Activated T-helper 1 cell treated with anti-CD3 and anti-CD28 coated beads, Interleukin-12 subunit alpha, Interleukin-12 subunit beta, Interleukin-2, Interleukin-4 antibody, amounts not matched to agents 30 ng/mL and 10 ng/mL and 1 ng/mL, durations not matched to agents 14 hours and 24 hours and 36 hours (primary cell): ENCODE measurements at regions of chr7 and their contacts with region 1.

Region 1: DNA sequence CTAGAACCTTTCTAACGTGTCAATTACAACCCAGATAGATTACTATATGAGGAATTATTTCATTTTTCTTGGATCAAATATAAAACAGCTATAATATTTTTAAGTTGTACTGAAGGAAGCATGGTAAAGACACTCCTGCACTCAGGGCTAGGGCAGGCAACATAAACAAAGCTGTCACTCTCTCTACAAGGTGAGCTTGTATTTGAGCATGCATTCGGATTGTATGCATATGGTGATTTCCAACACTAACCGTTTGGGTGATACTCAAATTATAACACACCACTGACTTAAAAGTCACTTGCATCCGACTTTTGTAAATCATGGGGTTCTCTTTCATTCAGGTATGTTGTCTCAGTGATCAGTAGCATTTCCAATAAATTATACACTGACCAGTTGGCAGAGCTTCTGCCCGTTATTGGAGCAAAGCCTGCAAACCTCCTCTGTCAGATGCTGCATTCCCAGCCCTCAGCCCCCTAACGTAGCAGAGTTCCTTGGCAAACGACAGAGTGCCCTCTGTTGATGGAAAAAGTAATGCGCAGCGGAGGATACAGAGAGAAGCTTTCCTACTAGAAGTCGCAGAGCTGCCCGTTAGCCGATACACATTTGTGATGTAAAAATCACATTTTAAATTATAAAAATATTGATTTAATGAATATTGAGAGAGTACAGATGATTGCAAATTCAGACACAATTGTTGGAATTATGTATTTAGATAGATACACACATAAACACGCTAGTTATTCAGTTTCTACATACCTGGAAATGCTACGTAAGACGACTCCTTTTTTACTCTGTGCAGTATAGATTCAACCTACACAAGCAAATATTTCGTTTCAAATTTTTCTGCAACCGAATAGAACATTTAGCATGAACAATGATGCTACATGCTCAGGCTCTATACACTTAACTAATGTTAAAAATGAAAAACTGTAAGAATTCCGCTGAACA is 173.9 kb upstream of the SP4 start:
- DNase-seq: peak; percentile 37
- H3K4me3 Mint-ChIP-seq: peak overlapping the region; percentile 74
- H3K27ac Mint-ChIP-seq: peak overlapping the region; percentile 32
- H3K4me1 Mint-ChIP-seq: peaks cover 21% of the 10 kb centered on the region
- H3K27me3 Mint-ChIP-seq: peaks cover 70% of the 10 kb centered on the region

Region 2: GRCh38 chr7:20778063-20778721 is 475.8 kb before region 1 on chr7:
- intact Hi-C with region 1: loop called (anchors 5 kb)
- DNase-seq: no peak
- H3K4me3 Mint-ChIP-seq: no peak overlapping the region
- H3K27ac Mint-ChIP-seq: no peak overlapping the region
- H3K4me1 Mint-ChIP-seq: peaks cover 9% of the 10 kb centered on the region
- H3K27me3 Mint-ChIP-seq: peaks cover 73% of the 10 kb centered on the region

Region 3: GRCh38 chr7:21352540-21353387 is 98.8 kb after region 1 on chr7:
- intact Hi-C with region 1: loop called (anchors 5 kb)
- DNase-seq: no peak
- H3K4me3 Mint-ChIP-seq: peak overlapping the region; percentile 67
- H3K27ac Mint-ChIP-seq: peak overlapping the region; percentile 96
- H3K4me1 Mint-ChIP-seq: peaks cover 69% of the 10 kb centered on the region
- H3K27me3 Mint-ChIP-seq: no peaks in the 10 kb centered on the region

Region 4: DNA sequence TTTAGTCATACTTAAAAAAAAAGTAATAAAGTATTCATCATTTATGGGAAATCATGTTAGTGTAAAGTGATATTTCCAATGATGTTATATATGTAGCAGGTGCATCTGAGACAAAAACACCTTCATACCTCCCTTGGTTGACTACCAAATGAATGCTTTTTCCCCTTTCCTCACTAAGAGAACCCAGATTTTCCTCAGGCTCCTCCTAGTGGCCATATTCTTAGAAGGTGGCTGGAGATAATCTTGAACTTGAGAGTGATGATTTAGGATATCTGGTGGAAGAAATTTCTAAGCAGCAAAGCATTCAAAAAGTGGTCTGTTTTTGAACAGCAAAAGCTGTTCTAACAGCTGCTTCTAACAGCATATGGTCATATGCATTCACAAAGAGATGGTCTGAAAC is 272.0 kb after region 1 on chr7:
- intact Hi-C with region 1: loop called (anchors 1 kb)
- DNase-seq: no peak
- H3K4me3 Mint-ChIP-seq: no peak overlapping the region
- H3K27ac Mint-ChIP-seq: no peak overlapping the region
- H3K4me1 Mint-ChIP-seq: no peaks in the 10 kb centered on the region
- H3K27me3 Mint-ChIP-seq: peaks cover 21% of the 10 kb centered on the region

Region 5: DNA sequence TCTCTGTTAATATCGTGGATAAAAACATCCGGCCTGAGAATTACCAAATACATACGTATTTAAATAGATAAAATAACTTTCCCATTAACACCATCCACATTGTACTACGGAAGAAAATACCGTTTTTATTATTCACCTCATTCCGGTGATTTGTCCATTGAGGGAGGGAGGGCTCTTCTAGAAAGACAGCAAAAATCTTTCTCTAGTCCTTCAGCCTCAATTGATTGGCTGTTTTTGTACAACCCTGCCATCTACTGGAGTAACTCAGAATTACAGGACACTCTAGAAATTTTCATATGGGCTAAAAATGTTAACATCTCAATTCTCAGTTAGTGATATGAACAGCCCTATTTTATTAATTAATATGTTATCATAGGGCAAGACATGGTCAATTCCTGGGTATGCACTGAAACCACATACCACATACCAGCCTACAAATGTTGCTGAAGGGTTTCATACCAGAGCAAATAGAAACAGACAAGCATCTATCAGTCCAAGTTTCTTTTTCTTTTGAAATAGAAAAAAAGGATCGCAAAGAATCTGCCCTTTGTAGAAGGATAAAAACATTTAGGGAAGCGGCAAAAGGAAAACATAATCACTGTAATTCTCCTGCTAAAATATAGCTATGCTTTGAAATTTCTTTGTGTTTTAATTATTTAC is 747.5 kb after region 1 on chr7:
- intact Hi-C with region 1: loop called (anchors 2 kb)
- DNase-seq: no peak
- H3K4me3 Mint-ChIP-seq: no peak overlapping the region
- H3K27ac Mint-ChIP-seq: no peak overlapping the region
- H3K4me1 Mint-ChIP-seq: peaks cover 7% of the 10 kb centered on the region
- H3K27me3 Mint-ChIP-seq: peaks cover 8% of the 10 kb centered on the region